Activated CD8-positive, alpha-beta memory T cell treated with anti-CD3 and anti-CD28 coated beads, Interleukin-2, amount 10 ng/mL, durations not matched to agents 7 days and 5 days (primary cell): ENCODE measurements at regions of chr22 and their contacts with region 1.

Region 1: DNA sequence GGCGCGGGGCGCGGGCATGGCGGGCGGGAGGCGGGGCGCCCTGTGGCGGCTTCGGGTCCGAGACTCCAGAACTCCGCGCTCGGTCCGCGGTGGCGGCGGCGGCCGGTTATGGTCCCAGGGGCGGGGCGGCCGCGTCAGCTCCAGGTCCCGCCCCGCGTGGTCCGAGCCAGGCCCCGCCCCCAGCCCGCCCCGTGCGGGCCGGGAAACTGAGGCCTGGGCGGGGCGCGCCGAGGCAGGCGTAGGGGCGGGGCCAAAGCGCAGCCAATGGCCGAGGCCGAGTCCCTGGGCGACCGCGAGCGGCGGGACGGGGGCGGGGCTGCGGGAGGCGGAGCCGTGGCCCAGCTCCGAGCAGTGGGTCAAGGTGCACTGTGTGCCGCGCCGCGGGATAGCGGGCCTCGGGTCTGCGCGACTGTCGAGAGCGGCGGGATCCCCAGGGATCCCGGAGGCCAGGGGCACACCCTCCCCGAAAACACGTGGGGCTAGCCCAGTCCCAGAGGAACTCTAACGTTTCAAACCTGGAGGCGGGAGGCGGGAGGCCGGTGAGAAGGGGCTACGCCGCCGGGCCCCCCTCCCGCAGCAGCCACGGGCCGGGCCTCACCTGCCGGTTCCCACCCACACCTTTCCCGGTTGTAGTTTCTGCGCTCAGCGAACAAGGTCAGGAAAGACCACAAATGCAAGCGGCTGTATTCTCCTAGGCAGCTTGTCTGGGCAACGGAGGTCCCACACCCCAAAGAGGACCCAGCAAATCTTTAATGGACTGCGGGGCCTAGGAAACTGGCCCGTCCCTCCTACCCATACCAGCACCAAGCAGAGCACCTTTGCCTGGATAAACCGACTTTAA is at the start of gene SLC25A1:
- DNase-seq: peak; percentile 90
- ATAC-seq: peak; percentile 82
- H3K4me3 Mint-ChIP-seq: peak within 1 kb of the TSS; percentile 77
- H3K27ac Mint-ChIP-seq: peak within 1 kb of the TSS; percentile 73
- H3K4me1 Mint-ChIP-seq: peaks cover 31% of the 10 kb centered on the region
- H3K27me3 Mint-ChIP-seq: no peaks in the 10 kb centered on the region
- total RNA-seq, gene SLC25A1: 60.6 to 68.1 TPM

Region 2: DNA sequence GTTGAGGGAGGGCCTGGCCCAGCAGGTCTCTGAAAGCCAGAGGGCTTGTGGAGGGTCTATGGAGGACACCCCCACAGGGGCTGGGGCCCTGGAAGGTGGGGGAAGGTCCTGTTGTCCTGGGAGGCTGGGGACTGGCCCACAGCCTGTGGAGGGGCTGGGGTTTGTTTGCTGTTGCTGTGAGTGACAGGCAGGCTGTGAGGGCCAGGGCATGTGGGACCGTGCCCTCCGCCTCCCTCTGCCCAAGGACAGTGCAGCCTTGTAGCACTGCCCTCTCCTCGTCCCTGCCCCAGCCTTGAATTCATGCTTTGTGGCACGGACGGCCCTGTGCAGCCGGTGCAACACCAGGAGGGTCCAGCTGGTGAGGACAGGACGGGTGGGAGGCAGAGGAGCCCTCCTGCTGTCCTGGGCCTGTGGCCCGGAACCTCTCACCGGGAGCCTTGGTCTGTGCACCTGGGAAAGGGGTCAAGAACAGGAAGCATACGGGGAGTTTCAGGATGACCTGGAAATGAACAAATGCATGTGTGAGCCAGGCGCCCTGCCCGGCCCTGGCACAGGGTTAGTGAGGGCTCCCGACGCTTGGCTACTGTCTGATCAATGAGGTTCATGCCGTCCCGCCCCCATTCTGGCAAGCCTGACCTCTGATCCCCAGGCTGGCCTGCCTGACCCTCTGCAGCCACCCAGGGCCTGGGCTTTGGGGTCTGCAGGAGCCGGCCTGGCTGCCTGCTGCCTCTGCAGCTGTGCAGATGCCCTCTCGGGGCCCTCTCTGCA is 205.4 kb before region 1 on chr22:
- CTCF ChIA-PET with region 1: no interaction called
- DNase-seq: no peak
- ATAC-seq: no peak
- H3K4me3 Mint-ChIP-seq: no peak overlapping the region
- H3K27ac Mint-ChIP-seq: no peak overlapping the region
- H3K4me1 Mint-ChIP-seq: peaks cover 3% of the 10 kb centered on the region
- H3K27me3 Mint-ChIP-seq: peaks cover 19% of the 10 kb centered on the region

Region 3: DNA sequence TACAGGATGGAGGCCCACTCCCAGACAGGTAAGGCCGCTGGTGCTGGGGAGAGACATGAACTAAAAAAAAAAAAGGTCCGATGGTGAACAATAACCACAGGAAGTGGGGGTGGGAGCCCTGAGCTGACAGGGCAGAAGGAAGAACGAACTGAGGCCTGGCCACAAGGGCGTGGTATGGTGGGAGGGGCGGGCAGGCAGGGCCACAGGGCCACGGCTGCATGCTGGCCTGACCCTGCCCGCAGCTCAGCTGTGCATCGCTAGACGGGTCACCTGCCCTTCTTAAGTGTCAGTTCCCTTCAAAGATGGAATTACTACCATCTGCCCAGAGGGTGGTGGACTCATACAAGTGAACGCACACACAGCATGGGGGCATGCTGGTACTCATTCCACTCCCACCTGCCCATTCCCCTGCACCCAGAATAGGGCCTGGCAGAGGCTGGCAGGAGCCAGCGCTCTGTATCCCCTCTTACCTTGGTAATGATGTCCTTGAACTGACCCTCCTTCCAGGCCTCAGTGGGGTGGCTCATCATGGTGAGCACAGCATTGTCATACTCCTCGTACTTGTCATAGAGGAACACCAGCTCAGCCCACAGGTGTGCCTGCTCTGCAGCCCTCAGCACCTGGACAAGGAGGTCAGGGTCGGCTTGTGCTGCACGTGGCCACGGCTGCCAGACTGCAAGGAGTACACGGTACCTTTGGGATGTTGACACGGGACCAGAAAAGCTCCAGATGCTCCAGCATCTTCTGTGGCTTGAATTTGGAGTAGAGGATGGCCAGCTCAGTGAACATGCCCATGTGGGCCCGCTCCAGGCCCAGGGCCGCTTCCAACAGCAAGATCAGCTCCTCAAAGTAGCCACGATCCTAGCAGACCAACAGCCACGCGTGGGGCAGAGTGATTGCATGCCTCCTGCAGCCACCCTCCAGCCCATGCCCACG is 17.2 kb after region 1 on chr22:
- CTCF ChIA-PET with region 1: interaction called, 11 read pairs
- DNase-seq: peak; percentile 71
- ATAC-seq: peak; percentile 78
- H3K4me3 Mint-ChIP-seq: no peak overlapping the region
- H3K27ac Mint-ChIP-seq: peak overlapping the region; percentile 53
- H3K4me1 Mint-ChIP-seq: peaks cover 18% of the 10 kb centered on the region
- H3K27me3 Mint-ChIP-seq: peaks cover 4% of the 10 kb centered on the region

Region 4: GRCh38 chr22:19629720-19630419 is 451.0 kb after region 1 on chr22:
- CTCF ChIA-PET with region 1: interaction called, 10 read pairs
- DNase-seq: peak; percentile 88
- ATAC-seq: peak; percentile 97
- H3K4me3 Mint-ChIP-seq: no peak overlapping the region
- H3K27ac Mint-ChIP-seq: no peak overlapping the region
- H3K4me1 Mint-ChIP-seq: no peaks in the 10 kb centered on the region
- H3K27me3 Mint-ChIP-seq: peaks cover 5% of the 10 kb centered on the region